ENCODE measurements at regions of chr1 and their contacts with region 1.

Region 1: GRCh38 chr1:31548907-31549808 is 27.2 kb upstream of the TINAGL1 start:
- DNase-seq: peak; percentile 93
- ATAC-seq: peak; percentile 89
- H3K4me3 Mint-ChIP-seq: peak overlapping the region; percentile 81
- H3K27ac Mint-ChIP-seq: no peak overlapping the region
- H3K4me1 Mint-ChIP-seq: peaks cover 14% of the 10 kb centered on the region; the same call in 1 of the 2 replicates
- H3K27me3 Mint-ChIP-seq: no peaks in the 10 kb centered on the region
- CTCF ChIP-seq: peak; percentile 91

Region 2: GRCh38 chr1:31413405-31414125 is 135.6 kb before region 1 on chr1:
- CTCF ChIA-PET with region 1: interaction called, 14 read pairs
- POLR2A ChIA-PET with region 1: no interaction called
- DNase-seq: peak; percentile 55
- ATAC-seq: peak; percentile 25
- H3K4me3 Mint-ChIP-seq: peak overlapping the region; percentile 95
- H3K27ac Mint-ChIP-seq: 0 out of 2 replicates have a peak overlapping the region, but pooled peaks have one; percentile 47
- H3K4me1 Mint-ChIP-seq: peaks cover 37% of the 10 kb centered on the region
- H3K27me3 Mint-ChIP-seq: peaks cover 16% of the 10 kb centered on the region
- CTCF ChIP-seq: no peak

Region 3: GRCh38 chr1:31440800-31441472 is 108.2 kb before region 1 on chr1:
- CTCF ChIA-PET with region 1: interaction called, 15 read pairs
- POLR2A ChIA-PET with region 1: no interaction called
- DNase-seq: no peak
- ATAC-seq: no peak
- H3K4me3 Mint-ChIP-seq: no peak overlapping the region
- H3K27ac Mint-ChIP-seq: no peak overlapping the region
- H3K4me1 Mint-ChIP-seq: no peaks in the 10 kb centered on the region
- H3K27me3 Mint-ChIP-seq: no peaks in the 10 kb centered on the region; the same call in none of the 2 replicates
- CTCF ChIP-seq: no peak

Region 4: DNA sequence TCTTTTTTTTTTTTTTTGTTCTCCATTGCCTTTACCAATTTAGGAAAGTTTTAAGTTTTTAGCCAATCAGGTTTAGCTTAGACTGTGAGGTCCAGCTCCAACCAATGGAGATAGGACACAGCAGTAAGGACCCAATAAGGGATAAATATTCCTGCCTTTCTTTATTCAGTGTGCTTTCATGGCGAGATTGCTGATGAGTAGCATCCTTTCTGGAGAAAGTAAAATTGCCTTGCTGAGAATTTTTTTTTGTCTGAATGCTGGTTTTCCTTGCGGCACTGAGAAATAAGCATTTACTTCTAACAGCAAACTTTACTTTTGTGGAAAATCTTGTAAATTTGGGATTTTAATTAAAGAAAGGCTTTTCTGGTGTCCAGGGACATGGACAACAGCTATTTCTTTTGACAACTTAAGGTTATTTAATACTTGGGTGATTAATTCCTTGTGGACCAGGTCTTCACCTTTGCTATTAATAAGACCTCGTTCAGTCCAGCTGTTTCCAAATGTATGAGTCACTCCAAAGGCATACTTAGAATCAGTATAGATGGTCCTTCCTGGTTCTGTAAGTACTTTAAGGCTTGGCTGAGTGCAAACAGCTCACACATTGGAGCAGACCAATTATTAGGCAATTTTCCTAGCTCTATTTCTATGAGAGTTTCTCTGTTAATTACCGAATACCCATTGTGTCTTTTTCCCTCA is 82.0 kb before region 1 on chr1:
- CTCF ChIA-PET with region 1: interaction called, 10 read pairs
- POLR2A ChIA-PET with region 1: no interaction called
- DNase-seq: no peak
- ATAC-seq: no peak
- H3K4me3 Mint-ChIP-seq: no peak overlapping the region
- H3K27ac Mint-ChIP-seq: no peak overlapping the region
- H3K4me1 Mint-ChIP-seq: peaks cover 23% of the 10 kb centered on the region
- H3K27me3 Mint-ChIP-seq: no peaks in the 10 kb centered on the region; the same call in 1 of the 2 replicates
- CTCF ChIP-seq: no peak

Region 5: GRCh38 chr1:31531177-31531999 is 17.8 kb before region 1 on chr1:
- CTCF ChIA-PET with region 1: interaction called, 16 read pairs
- POLR2A ChIA-PET with region 1: interaction called, 3 read pairs
- DNase-seq: no peak
- ATAC-seq: peak; percentile 48; the same call in 1 of the 2 replicates
- H3K4me3 Mint-ChIP-seq: no peak overlapping the region
- H3K27ac Mint-ChIP-seq: no peak overlapping the region; the same call in 1 of the 2 replicates
- H3K4me1 Mint-ChIP-seq: peaks cover 4% of the 10 kb centered on the region
- H3K27me3 Mint-ChIP-seq: no peaks in the 10 kb centered on the region; the same call in none of the 2 replicates
- CTCF ChIP-seq: no peak

Region 6: GRCh38 chr1:31587720-31588394 is 38.7 kb after region 1 on chr1:
- CTCF ChIA-PET with region 1: interaction called, 16 read pairs
- POLR2A ChIA-PET with region 1: no interaction called
- DNase-seq: peak; percentile 85
- ATAC-seq: peak; percentile 79
- H3K4me3 Mint-ChIP-seq: peak overlapping the region; percentile 45
- H3K27ac Mint-ChIP-seq: no peak overlapping the region; the same call in 1 of the 2 replicates
- H3K4me1 Mint-ChIP-seq: peaks cover 20% of the 10 kb centered on the region
- H3K27me3 Mint-ChIP-seq: peaks cover 23% of the 10 kb centered on the region
- CTCF ChIP-seq: no peak; the same call in 1 of the 2 replicates